Vagina (tissue), 2 donors: ENCODE measurements at regions of chr18 and their contacts with region 1.

Region 1: DNA sequence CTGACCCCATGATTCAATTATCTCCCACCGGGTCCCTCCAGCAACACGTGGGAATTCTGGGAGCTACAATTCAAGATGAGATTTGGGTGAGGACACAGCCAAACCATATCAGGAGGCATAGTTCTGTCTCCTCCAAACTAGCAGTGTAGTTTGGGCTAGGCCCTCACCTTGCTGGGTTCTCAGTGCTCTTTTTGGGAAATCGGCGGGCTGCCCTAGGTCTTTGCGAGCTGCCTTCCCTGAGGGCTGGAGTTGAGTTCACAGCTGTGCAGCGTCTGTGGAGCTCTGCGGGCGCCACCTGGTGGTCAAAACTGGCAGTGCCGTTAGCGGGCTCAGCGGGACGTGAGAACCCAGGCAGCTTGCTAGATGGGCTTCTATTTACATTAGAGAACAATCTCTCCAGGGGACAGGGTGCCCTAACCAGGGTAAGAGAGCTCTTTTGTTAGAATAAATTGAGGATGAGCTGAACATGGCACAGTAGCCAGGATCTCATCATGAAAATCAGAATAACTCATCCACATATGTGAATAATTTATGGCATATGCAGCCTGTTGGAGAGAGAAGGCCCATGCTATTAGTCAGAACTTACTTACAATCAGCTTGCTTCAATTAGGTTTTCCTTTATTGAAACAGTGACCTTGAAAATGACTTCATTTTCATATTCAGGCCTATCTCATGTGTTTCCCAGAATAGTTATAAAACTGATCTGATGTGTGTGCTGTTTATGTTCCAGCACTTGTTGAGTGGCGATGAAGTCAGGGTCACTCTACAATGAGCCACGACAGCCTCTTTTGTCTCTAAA is 27.4 kb upstream of the YES1 start:
- DNase-seq: no peak
- H3K4me3 ChIP-seq: no peak overlapping the region
- H3K27ac ChIP-seq: no peak overlapping the region
- H3K4me1 ChIP-seq: no peaks in the 10 kb centered on the region
- H3K27me3 ChIP-seq: no peaks in the 10 kb centered on the region
- CTCF ChIP-seq: peak; percentile 86 to 97 (median 94)
- POLR2A ChIP-seq: no peak

Region 2: GRCh38 chr18:623761-624620 is 215.4 kb before region 1 on chr18:
- intact Hi-C with region 1: loop called (anchors 10 kb)
- DNase-seq: no peak
- H3K4me3 ChIP-seq: no peak overlapping the region
- H3K27ac ChIP-seq: no peak overlapping the region
- H3K4me1 ChIP-seq: no peaks in the 10 kb centered on the region
- H3K27me3 ChIP-seq: no peaks in the 10 kb centered on the region
- CTCF ChIP-seq: peak; percentile 29 to 41 (median 38)
- POLR2A ChIP-seq: no peak